Activated CD4-positive, alpha-beta T cell treated with anti-CD3 and anti-CD28 coated beads for 36 hours (primary cell): ENCODE measurements at regions of chr5 and their contacts with region 1.

Region 1: DNA sequence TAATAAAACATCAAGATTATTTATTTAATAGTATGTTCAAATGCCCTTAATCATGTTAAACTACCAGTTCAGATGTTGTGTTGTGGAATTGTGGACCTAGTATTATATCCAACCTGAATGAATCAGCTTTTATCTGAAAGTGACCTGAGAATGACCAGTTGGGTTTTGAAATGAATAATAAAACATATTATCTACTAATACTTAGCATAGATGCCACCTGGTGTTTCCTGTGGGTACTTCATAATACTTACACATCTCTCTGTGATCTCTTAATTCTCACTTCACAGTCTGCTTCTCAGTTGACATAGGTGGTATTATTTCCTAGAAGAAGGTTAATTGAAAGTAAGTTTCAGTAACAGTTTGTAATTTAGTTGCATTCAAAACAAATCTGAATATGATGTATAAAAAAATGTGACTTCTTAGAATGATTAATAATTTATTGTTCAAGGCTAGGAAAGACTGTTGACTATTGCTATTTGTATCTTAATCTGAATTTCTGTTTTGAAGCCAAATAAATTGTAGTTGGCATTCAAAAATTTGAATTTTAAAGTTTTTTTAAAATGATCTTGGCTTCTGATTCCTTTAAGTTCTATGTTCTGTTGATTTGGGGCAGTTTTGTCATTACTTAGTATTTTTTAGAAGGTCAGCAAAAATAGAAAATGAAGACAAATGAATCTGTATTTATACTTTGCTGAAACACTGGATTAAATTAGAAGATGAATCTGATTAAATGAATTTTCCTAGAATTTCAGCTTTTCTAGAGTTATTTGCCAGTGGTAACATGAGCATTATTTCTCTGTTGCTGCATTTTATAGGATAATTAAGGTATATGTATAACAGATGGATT is 48.2 kb downstream of the KIF2A start:
- DNase-seq: no peak
- ATAC-seq: peak; percentile 39
- H3K4me3 Mint-ChIP-seq: no peak overlapping the region
- H3K27ac Mint-ChIP-seq: no peak overlapping the region
- H3K4me1 Mint-ChIP-seq: peaks cover 8% of the 10 kb centered on the region
- H3K27me3 Mint-ChIP-seq: no peaks in the 10 kb centered on the region

Region 2: GRCh38 chr5:62152394-62153087 is 201.7 kb before region 1 on chr5:
- CTCF ChIA-PET with region 1: no interaction called
- POLR2A ChIA-PET with region 1: no interaction called
- intact Hi-C with region 1: no loop called
- DNase-seq: no peak
- ATAC-seq: no peak
- H3K4me3 Mint-ChIP-seq: no peak overlapping the region
- H3K27ac Mint-ChIP-seq: no peak overlapping the region
- H3K4me1 Mint-ChIP-seq: no peaks in the 10 kb centered on the region
- H3K27me3 Mint-ChIP-seq: peaks cover 8% of the 10 kb centered on the region

Region 3: GRCh38 chr5:62326302-62326701 is 27.9 kb before region 1 on chr5:
- CTCF ChIA-PET with region 1: interaction called, 12 read pairs
- POLR2A ChIA-PET with region 1: no interaction called
- intact Hi-C with region 1: no loop called
- DNase-seq: no peak
- ATAC-seq: peak; percentile 50
- H3K4me3 Mint-ChIP-seq: no peak overlapping the region
- H3K27ac Mint-ChIP-seq: peak overlapping the region; percentile 62
- H3K4me1 Mint-ChIP-seq: peaks cover 75% of the 10 kb centered on the region
- H3K27me3 Mint-ChIP-seq: no peaks in the 10 kb centered on the region

Region 4: DNA sequence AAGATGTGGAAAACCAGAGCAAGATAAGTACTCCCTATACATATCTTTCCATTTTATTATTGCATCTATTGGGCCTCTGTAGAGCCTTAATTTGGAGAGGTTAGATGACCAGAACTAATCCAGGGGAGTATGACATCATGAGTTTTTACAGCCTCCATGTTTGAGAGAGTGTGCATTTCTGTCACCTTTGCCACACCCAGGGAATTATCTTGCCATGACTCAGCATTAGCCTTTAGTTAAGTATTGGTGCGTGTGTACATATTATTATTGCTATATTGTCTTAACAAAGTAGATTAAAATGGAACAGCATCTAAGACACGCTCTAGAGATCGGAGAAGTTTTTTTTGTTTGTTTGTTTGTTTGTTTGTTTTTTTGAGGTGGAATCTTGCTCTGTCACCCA is 21.8 kb after region 1 on chr5:
- CTCF ChIA-PET with region 1: interaction called, 4 read pairs
- POLR2A ChIA-PET with region 1: no interaction called
- intact Hi-C with region 1: loop called in 1 of 2 experiments (anchors 2 kb)
- DNase-seq: no peak
- ATAC-seq: peak; percentile 39
- H3K4me3 Mint-ChIP-seq: no peak overlapping the region
- H3K27ac Mint-ChIP-seq: peak overlapping the region; percentile 77
- H3K4me1 Mint-ChIP-seq: peaks cover 2% of the 10 kb centered on the region
- H3K27me3 Mint-ChIP-seq: no peaks in the 10 kb centered on the region

Region 5: GRCh38 chr5:62395210-62395950 is 41.1 kb after region 1 on chr5:
- CTCF ChIA-PET with region 1: interaction called, 3 read pairs
- POLR2A ChIA-PET with region 1: no interaction called
- intact Hi-C with region 1: loop called (anchors 5 kb)
- DNase-seq: peak; percentile 41
- ATAC-seq: peak; percentile 70
- H3K4me3 Mint-ChIP-seq: no peak overlapping the region
- H3K27ac Mint-ChIP-seq: peak overlapping the region; percentile 87
- H3K4me1 Mint-ChIP-seq: peaks cover 50% of the 10 kb centered on the region
- H3K27me3 Mint-ChIP-seq: no peaks in the 10 kb centered on the region

Region 6: DNA sequence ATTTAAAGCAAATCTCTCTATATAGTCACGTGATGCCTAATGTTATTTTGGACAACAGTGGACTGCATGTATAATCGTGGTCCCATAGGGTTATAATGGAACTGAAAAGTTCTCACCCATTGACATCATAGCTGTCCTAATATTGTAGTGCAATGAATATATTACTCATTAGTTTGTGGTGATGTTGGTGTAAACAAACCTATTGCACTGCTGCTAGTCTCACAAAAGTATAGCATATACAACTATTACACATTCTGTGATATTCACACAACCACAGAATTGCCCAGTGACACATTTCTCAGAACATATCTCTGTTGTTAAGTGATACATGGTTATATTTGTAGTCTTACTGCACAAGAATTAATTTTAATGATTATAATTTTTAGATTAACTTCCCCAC is 96.0 kb after region 1 on chr5:
- CTCF ChIA-PET with region 1: no interaction called
- POLR2A ChIA-PET with region 1: no interaction called
- intact Hi-C with region 1: no loop called
- DNase-seq: no peak
- ATAC-seq: no peak
- H3K4me3 Mint-ChIP-seq: no peak overlapping the region
- H3K27ac Mint-ChIP-seq: no peak overlapping the region
- H3K4me1 Mint-ChIP-seq: no peaks in the 10 kb centered on the region
- H3K27me3 Mint-ChIP-seq: no peaks in the 10 kb centered on the region